Activated CD4-positive, alpha-beta T cell treated with anti-CD3 and anti-CD28 coated beads, Interleukin-2, amount 10 ng/mL, durations not matched to agents 24 days and 14 days (primary cell): ENCODE measurements at regions of chr1 and their contacts with region 1.

Region 1: DNA sequence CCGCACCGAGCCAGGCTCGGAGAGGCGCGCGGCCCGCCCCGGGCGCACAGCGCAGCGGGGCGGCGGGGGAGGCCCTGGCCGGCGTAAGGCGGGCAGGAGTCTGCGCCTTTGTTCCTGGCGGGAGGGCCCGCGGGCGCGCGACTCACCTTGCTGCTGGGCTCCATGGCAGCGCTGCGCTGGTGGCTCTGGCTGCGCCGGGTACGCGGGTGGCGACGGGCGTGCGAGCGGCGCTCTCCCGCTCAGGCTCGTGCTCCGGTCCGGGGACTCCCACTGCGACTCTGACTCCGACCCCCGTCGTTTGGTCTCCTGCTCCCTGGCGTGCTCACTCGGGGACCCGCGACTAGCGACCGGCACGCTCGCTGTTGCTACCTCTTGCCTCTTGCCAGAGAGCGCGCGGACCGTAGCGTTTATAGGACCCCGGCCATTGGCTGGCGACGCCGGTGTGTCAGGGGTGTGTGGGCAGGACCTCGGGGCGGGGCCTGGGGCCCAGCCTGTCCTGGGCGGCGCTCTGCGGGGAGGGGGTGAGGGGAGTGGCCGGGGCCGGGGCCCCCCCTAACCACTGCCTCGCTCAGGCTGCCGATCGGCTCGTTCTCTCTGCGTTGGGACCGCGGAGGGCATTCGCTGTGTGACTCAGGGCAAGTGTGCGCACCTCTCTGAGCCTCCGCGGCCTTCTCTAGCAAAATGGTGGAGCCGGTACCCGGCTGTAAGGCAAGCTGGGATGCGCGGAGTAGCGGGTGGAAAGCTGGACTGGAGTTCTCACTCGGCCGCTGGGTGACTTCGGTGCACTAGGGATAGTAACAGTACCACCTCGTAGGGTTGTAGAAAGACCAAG is at the start of gene SLC2A1:
- DNase-seq: peak; percentile 98
- H3K4me3 Mint-ChIP-seq: peak within 1 kb of the TSS; percentile 97
- H3K27ac Mint-ChIP-seq: peak within 1 kb of the TSS; percentile 100
- H3K4me1 Mint-ChIP-seq: peaks cover 58% of the 10 kb centered on the region
- H3K27me3 Mint-ChIP-seq: peaks cover 6% of the 10 kb centered on the region
- total RNA-seq, gene SLC2A1: 135 and 144 TPM in 2 replicates

Region 2: DNA sequence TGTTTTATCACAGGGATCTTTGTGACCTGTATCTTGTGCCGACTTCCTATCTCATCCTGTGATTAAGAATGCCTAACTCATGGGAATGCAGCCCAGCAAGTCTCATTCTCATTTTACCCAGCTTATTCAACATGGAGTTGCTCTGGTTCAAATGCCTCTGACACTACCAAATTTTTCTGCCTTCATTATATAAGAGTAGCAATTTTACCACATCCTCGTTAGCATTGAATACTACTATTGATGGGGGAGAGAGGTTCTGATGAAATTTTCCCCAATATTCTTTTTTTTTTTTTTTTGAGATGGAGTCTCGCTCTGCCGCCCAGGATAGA is 344.9 kb before region 1 on chr1:
- intact Hi-C with region 1: no loop called
- DNase-seq: no peak
- H3K4me3 Mint-ChIP-seq: no peak overlapping the region
- H3K27ac Mint-ChIP-seq: no peak overlapping the region
- H3K4me1 Mint-ChIP-seq: no peaks in the 10 kb centered on the region
- H3K27me3 Mint-ChIP-seq: no peaks in the 10 kb centered on the region

Region 3: GRCh38 chr1:42681741-42682483 is 276.8 kb before region 1 on chr1 and contains the start of gene YBX1:
- intact Hi-C with region 1: loop called (anchors 5 kb)
- DNase-seq: peak; percentile 98
- H3K4me3 Mint-ChIP-seq: peak within 1 kb of the TSS; percentile 94
- H3K27ac Mint-ChIP-seq: peak within 1 kb of the TSS; percentile 98
- H3K4me1 Mint-ChIP-seq: peaks cover 50% of the 10 kb centered on the region
- H3K27me3 Mint-ChIP-seq: no peaks in the 10 kb centered on the region
- total RNA-seq, gene YBX1: 861 and 867 TPM in 2 replicates

Region 4: DNA sequence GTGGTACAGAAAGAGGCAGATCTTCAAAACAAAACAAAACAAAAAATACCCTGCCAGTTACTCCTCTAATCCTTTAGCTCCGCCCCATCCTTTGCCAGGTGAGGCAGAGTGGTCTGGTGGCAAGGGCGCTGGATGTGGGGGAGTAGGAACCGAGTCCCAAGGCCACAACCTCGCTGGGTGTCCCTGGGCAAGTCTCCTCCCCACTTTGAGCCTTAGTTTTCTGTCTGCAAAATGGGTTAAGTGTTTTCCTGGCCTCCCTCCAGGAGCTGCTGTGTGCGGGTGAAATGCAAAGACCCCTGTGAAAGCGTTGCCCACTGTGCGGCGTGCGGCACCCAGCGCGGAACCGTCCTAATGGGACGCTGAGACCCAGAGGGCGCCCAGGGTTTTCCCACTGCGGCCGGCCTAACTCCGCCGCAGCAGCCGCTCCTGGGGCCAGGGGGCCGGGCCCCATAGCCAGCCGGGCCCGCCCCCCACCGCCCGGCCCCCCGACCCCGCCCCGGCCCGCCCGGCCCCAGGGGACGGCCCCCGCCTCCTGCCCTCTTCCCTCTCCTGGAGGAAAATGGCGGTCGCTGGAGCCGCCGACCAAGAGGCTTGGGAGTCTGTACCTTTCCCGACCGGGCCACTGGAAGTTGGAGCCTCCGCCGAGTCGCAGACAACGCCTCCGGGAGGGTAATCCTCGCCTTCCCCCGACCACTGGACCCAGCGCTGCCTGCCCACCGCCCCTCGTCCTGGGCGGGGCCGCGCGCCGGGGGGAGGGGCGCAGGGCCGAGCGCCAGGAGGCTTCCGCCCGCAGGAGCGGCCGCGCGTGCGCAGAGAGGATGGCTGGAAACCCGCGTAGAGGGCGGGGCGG is 141.9 kb before region 1 on chr1 and contains the starts of genes ERMAP and SVBP:
- intact Hi-C with region 1: loop called (anchors 1 kb)
- DNase-seq: peak; percentile 97
- H3K4me3 Mint-ChIP-seq: peak within 1 kb of the TSS; percentile 82
- H3K27ac Mint-ChIP-seq: peak within 1 kb of the TSS; percentile 83
- H3K4me1 Mint-ChIP-seq: peaks cover 17% of the 10 kb centered on the region
- H3K27me3 Mint-ChIP-seq: no peaks in the 10 kb centered on the region
- total RNA-seq, gene ERMAP: 3.5 and 3.8 TPM in 2 replicates
- total RNA-seq, gene SVBP: 7.3 and 10.0 TPM in 2 replicates

Region 5: DNA sequence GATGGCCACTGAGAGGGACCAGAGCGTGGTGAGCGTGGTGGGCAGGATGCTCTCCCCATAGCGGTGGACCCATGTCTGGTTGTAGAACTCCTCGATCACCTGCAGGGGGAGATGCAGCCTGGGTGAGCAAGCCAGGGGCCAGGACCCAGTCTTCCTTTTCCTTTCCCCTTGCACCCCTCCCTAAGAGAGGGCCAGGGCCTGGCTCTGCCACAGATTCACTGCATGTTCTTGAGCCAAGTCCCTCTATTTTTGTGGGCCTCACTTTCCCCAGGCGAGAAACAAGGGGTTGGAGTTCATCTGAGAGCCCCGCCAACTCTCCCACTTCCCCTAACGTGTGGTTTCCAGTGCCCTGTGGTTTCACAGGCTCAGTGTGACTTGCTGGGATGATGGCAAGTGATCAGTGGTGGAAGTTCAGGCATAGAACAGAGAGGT is 27.6 kb before region 1 on chr1:
- intact Hi-C with region 1: loop called (anchors 1 kb)
- DNase-seq: peak; percentile 87
- H3K4me3 Mint-ChIP-seq: peak overlapping the region; percentile 79
- H3K27ac Mint-ChIP-seq: peak overlapping the region; percentile 91
- H3K4me1 Mint-ChIP-seq: peaks cover 72% of the 10 kb centered on the region
- H3K27me3 Mint-ChIP-seq: no peaks in the 10 kb centered on the region

Region 6: DNA sequence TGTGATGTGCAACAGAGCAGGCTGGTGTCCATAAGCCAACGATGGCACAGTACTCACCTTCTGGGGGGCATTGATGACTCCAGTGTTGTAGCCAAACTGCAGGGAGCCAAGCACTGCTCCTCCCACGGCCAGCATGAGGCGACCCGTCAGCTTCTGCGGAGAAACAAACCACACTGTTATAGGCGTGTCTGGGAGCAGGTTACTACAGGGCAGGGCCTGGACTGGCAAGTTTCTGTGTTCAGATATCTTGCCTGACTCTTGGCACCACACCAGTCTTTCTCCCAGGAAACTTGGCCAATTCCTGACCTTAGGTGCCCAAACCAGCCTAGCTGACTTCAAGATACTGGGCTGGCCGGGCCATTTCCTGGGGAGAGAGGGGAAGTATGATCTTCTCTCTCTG is 15.5 kb before region 1 on chr1:
- intact Hi-C with region 1: loop called (anchors 1 kb)
- DNase-seq: peak; percentile 79
- H3K4me3 Mint-ChIP-seq: peak overlapping the region; percentile 68
- H3K27ac Mint-ChIP-seq: peak overlapping the region; percentile 88
- H3K4me1 Mint-ChIP-seq: peaks cover 89% of the 10 kb centered on the region
- H3K27me3 Mint-ChIP-seq: no peaks in the 10 kb centered on the region

Region 7: DNA sequence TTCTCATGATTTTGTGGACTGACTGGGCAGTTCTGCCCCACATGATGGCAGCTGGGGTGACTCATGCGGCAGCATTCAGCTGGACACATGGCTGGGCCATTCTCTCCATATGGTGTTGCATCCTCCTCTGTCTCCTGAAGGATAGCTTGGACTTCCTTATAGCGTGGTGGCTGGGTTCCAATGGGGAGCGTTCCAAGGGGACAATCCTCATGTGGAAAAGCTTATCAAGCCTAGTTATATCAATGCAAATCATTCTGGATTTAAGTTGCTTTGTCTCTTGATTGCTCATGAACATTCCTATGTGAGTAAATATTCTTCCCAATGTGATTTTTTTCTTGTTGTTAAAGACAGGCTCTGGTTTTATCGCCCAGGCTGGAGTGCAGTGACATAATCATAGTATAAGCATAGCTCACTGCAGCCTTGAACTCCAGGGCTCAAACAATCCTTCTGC is 13.2 kb after region 1 on chr1:
- intact Hi-C with region 1: no loop called
- DNase-seq: no peak
- H3K4me3 Mint-ChIP-seq: no peak overlapping the region
- H3K27ac Mint-ChIP-seq: no peak overlapping the region
- H3K4me1 Mint-ChIP-seq: peaks cover 2% of the 10 kb centered on the region
- H3K27me3 Mint-ChIP-seq: no peaks in the 10 kb centered on the region